ENCODE measurements at regions of chr19 and their contacts with region 1.

Region 1: DNA sequence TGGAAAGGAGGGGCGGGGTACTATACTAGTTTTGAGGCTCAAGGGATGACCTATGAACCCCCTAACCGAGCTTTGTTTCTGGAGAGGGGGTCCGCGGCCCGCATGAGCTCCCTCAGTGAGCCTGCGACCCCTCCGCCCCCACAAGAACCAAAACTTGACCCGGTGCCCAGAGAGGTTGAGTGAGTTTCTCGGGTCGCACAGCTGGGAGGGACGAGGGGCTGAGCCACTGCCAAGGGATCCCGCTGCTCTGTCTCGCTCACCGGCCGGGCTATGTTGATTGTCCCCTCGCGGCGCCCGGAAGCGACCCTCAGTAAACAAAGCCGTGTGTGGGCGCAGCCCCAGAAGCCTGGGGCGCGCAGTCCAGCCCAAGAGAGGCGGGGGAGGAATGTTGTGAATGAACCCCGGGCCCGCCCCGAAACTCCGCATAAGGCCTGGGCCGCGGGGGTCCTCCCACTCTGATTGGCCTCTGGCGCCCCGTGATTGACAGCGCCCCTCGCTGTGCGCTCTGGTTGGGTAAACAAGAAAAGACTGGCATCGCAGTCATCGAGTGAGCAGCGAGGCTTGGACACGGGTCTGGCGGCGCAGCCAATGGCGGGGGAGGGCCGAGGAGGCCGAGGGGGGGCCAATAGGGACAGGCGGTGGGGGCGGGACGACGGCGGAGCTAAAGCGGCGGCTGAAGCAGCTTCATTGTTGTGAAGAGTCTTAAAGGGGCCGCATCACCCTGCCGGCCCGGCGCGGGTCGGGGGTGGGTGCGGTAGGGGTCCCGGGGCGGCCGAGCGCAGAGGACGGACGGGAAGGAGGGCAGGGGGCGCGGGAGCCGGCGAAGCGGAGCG is at the start of gene ZSWIM4:
- DNase-seq: peak; percentile 95
- H3K4me3 Mint-ChIP-seq: peak within 1 kb of the TSS; percentile 99
- H3K27ac Mint-ChIP-seq: peak within 1 kb of the TSS; percentile 93
- H3K4me1 Mint-ChIP-seq: peaks cover 33% of the 10 kb centered on the region
- H3K27me3 Mint-ChIP-seq: no peaks in the 10 kb centered on the region
- total RNA-seq, gene ZSWIM4: 7.6 and 7.9 TPM in 2 replicates

Region 2: GRCh38 chr19:13557756-13558398 is 237.1 kb before region 1 on chr19:
- intact Hi-C with region 1: no loop called
- DNase-seq: no peak
- H3K4me3 Mint-ChIP-seq: no peak overlapping the region
- H3K27ac Mint-ChIP-seq: no peak overlapping the region
- H3K4me1 Mint-ChIP-seq: no peaks in the 10 kb centered on the region
- H3K27me3 Mint-ChIP-seq: no peaks in the 10 kb centered on the region

Region 3: DNA sequence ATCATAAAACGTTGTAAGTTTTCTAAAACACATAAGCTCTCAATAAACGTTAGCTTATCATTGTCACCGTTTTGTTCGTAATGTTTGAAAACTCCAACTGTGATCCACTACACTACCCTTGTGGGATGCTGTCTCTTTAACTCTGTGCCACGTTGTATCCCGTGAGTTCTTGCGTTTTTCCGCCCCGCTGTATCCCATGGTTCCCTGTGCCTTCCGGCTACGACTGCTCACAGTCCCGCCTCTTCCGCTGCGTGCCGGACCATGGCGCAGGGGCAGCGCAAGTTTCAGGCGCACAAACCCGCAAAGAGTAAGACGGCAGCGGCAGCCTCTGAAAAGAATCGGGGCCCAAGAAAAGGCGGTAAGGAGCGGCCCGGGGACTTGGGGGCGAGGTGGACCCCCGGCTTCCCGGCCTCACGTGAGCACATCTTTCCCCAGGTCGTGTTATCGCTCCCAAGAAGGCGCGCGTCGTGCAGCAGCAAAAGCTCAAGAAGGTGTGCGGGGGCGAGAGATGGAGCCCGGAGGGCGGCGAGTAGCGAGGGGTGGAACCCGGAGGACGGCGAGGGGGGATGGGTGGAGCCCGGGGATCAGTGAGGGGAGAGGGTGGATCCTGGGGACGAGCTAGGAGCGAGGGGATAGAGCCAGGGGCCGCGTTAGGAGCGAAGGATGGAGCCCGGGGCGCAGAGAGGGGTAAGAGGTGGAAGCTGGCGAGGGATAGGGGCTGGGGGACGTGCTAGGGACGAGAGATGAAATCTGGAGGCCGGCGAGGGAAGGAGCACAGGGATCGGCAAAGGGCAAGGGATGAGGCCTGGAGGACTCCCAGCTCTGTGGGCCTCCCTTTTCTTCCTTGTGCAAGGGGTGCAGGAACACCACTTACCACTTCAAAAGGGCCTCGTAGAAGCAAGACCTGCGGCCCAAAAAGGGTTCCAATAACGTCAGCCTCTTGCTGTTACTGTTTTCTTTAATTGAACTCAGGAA is 20.5 kb before region 1 on chr19 and contains the start of gene C19orf53:
- intact Hi-C with region 1: loop called (anchors 1 kb)
- DNase-seq: peak; percentile 87
- H3K4me3 Mint-ChIP-seq: peak within 1 kb of the TSS; percentile 100
- H3K27ac Mint-ChIP-seq: peak within 1 kb of the TSS; percentile 99
- H3K4me1 Mint-ChIP-seq: peaks cover 25% of the 10 kb centered on the region
- H3K27me3 Mint-ChIP-seq: no peaks in the 10 kb centered on the region
- total RNA-seq, gene C19orf53: 158 and 162 TPM in 2 replicates

Region 4: GRCh38 chr19:13833330-13834243 is 38.6 kb after region 1 on chr19:
- intact Hi-C with region 1: loop called (anchors 1 kb)
- DNase-seq: peak; percentile 91
- H3K4me3 Mint-ChIP-seq: peak overlapping the region; percentile 76
- H3K27ac Mint-ChIP-seq: peak overlapping the region; percentile 86
- H3K4me1 Mint-ChIP-seq: peaks cover 32% of the 10 kb centered on the region
- H3K27me3 Mint-ChIP-seq: no peaks in the 10 kb centered on the region

Region 5: GRCh38 chr19:13846557-13847406 is 51.8 kb after region 1 on chr19:
- intact Hi-C with region 1: loop called (anchors 1 kb)
- DNase-seq: peak; percentile 96
- H3K4me3 Mint-ChIP-seq: peak overlapping the region; percentile 86
- H3K27ac Mint-ChIP-seq: peak overlapping the region; percentile 97
- H3K4me1 Mint-ChIP-seq: peaks cover 45% of the 10 kb centered on the region
- H3K27me3 Mint-ChIP-seq: no peaks in the 10 kb centered on the region